Naive thymus-derived CD4-positive, alpha-beta T cell (primary cell): ENCODE measurements at regions of chr4 and their contacts with region 1.

Region 1: DNA sequence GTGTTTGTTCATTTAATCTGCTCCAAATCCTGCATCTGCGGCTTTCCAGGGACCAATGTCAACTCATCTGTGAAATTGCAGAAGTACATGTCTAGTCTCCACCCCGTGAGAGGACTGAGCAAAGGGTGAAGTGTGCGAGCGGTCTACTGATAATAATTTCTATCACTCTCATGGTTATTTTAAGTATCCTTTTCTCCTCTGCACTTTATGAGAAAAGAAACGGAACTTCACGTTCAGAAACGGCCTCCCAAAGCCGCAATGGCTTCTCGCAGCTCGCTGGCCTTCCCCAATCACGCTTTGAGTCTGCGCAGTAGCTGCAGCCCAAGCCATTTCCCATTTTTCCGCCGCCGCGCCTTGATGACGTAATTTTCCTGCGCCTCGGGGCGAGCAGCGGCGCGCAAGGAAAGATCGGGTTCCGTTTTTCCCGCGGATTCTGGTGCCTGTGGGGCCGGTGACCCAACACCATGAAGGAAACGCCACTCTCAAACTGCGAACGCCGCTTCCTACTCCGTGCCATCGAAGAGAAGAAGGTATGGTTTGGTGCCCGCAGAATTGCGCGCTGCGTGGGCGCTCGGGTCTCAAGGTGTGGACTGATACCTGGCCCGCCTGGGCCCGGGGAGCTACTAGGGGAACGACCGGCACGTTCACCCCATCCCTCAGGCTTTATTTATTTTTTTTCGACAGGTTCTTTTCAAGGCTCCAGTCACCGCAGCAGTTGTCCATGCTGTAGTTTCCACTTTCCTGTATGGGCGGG is at the start of gene EXOSC9:
- DNase-seq: peak; percentile 88 to 98 (median 95)
- ATAC-seq: peak; percentile 92
- H3K4me3 ChIP-seq: peak within 1 kb of the TSS; percentile 92
- H3K4me3 Mint-ChIP-seq: peak within 1 kb of the TSS; percentile 89 to 99 (median 95)
- H3K27ac ChIP-seq: peak within 1 kb of the TSS; percentile 93
- H3K27ac Mint-ChIP-seq: peak within 1 kb of the TSS; percentile 97 to 100 (median 99)
- H3K4me1 ChIP-seq: peaks cover 16 to 20% of the 10 kb centered on the region in 2 donors
- H3K4me1 Mint-ChIP-seq: peaks cover 26 to 55% (median 50%) of the 10 kb centered on the region in 7 donors
- H3K27me3 ChIP-seq: no peaks in the 10 kb centered on the region
- H3K27me3 Mint-ChIP-seq: peaks cover 0 to 2% (median 0%) of the 10 kb centered on the region in 5 donors
- total RNA-seq, gene EXOSC9: 37.5 to 55.0 (median 44.2) TPM

Region 2: GRCh38 chr4:121182296-121182695 is 618.8 kb before region 1 on chr4:
- CTCF ChIA-PET with region 1: no interaction called
- POLR2A ChIA-PET with region 1: no interaction called
- intact Hi-C with region 1: loop called in 1 of 2 experiments (anchors 2 kb)
- DNase-seq: peak in 7 of 9 donors; percentile 59 to 79 (median 67)
- ATAC-seq: peak; percentile 84
- H3K4me3 ChIP-seq: peak overlapping the region; percentile 54
- H3K4me3 Mint-ChIP-seq: peak overlapping the region; percentile 62 to 89 (median 84)
- H3K27ac ChIP-seq: peak overlapping the region; percentile 94
- H3K27ac Mint-ChIP-seq: peak overlapping the region; percentile 92 to 97 (median 95)
- H3K4me1 ChIP-seq: peaks cover 43 to 52% of the 10 kb centered on the region in 2 donors
- H3K4me1 Mint-ChIP-seq: peaks cover 52 to 93% (median 80%) of the 10 kb centered on the region in 7 donors
- H3K27me3 ChIP-seq: no peaks in the 10 kb centered on the region
- H3K27me3 Mint-ChIP-seq: no peaks in the 10 kb centered on the region

Region 3: GRCh38 chr4:121397941-121398601 is 403.1 kb before region 1 on chr4:
- CTCF ChIA-PET with region 1: no interaction called
- POLR2A ChIA-PET with region 1: no interaction called
- intact Hi-C with region 1: no loop called
- DNase-seq: no peak
- ATAC-seq: no peak
- H3K4me3 ChIP-seq: no peak overlapping the region
- H3K4me3 Mint-ChIP-seq: no peak overlapping the region
- H3K27ac ChIP-seq: no peak overlapping the region
- H3K27ac Mint-ChIP-seq: no peak overlapping the region
- H3K4me1 ChIP-seq: no peaks in the 10 kb centered on the region
- H3K4me1 Mint-ChIP-seq: no peaks in the 10 kb centered on the region
- H3K27me3 ChIP-seq: no peaks in the 10 kb centered on the region
- H3K27me3 Mint-ChIP-seq: peaks cover 0 to 4% (median 0%) of the 10 kb centered on the region in 5 donors

Region 4: DNA sequence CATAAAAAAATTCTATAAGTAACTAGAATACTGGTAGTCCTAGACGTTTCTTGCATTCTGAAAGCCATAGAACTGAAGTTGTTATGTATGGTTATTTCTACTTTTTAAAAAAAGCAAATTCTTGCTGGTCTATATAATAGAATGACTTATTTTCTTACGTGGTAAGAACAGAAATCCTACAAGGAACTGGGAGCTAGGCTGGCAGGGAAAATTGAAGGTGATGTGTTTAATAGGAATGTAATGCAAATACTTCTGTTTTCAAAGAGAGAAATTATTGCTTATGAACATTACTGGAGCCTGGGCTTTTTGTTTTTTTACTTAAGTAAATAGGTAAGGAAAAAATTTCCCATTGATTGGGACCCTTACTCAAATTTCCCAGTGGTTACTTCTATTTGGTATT is 13.6 kb after region 1 on chr4:
- CTCF ChIA-PET with region 1: no interaction called
- POLR2A ChIA-PET with region 1: interaction called, 11 read pairs
- intact Hi-C with region 1: no loop called
- DNase-seq: no peak
- ATAC-seq: no peak
- H3K4me3 ChIP-seq: no peak overlapping the region
- H3K4me3 Mint-ChIP-seq: no peak overlapping the region
- H3K27ac ChIP-seq: no peak overlapping the region
- H3K27ac Mint-ChIP-seq: peak overlapping the region in 1 of 9 donors; percentile 56
- H3K4me1 ChIP-seq: no peaks in the 10 kb centered on the region
- H3K4me1 Mint-ChIP-seq: peaks cover 0 to 53% (median 6%) of the 10 kb centered on the region in 7 donors
- H3K27me3 ChIP-seq: no peaks in the 10 kb centered on the region
- H3K27me3 Mint-ChIP-seq: no peaks in the 10 kb centered on the region

Region 5: DNA sequence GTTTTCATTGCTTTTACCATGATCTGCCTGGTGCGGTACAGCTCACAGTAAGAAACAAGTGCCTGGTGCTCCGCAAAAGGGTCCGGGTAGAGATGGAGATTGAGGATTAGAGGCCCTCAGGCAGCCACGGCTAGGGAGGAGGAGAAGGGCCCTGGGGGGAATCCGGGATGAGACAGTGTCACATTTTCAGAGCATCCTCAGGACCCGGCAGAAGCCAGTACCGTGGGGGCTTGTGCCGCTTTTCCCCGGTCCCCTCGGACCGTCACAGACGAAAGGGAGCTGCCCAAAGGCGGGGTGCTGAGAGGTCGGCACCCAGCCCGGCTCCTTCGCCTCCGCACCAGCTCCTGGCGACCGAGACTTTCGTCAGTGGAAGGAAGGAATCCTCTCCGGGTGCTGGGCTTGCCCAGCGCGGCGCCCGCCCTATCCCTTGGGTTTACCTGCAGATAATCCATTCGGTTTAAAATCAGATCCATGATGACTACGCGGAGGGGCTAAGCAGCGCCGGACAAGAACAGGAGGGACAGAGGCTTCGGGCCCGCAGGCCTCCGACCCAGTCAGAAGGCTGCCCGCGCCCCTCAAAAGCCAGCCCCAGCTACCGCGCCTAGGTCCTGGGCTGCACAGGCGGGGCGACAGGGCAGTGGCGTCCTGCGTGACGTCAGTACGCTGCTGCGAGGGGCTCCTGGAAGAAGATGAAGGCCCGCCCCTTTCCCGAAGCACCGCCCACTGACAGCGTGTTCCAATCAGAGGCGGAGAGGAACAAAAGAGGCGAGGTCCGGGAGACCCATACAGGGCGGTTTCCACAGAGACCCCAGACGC is 68.9 kb after region 1 on chr4 and contains the start of gene BBS7:
- CTCF ChIA-PET with region 1: no interaction called
- POLR2A ChIA-PET with region 1: interaction called, 4 read pairs
- intact Hi-C with region 1: loop called (anchors 1 kb)
- DNase-seq: peak; percentile 79 to 93 (median 89)
- ATAC-seq: peak; percentile 98
- H3K4me3 ChIP-seq: peak within 1 kb of the TSS; percentile 99
- H3K4me3 Mint-ChIP-seq: peak within 1 kb of the TSS; percentile 88 to 98 (median 97)
- H3K27ac ChIP-seq: peak within 1 kb of the TSS; percentile 77
- H3K27ac Mint-ChIP-seq: peak within 1 kb of the TSS; percentile 69 to 95 (median 90)
- H3K4me1 ChIP-seq: peaks cover 0 to 10% of the 10 kb centered on the region in 2 donors
- H3K4me1 Mint-ChIP-seq: peaks cover 9 to 17% (median 15%) of the 10 kb centered on the region in 7 donors
- H3K27me3 ChIP-seq: no peaks in the 10 kb centered on the region
- H3K27me3 Mint-ChIP-seq: peaks cover 0 to 30% (median 12%) of the 10 kb centered on the region in 5 donors
- total RNA-seq, gene BBS7: 3.7 to 13.1 (median 8.1) TPM

Region 6: DNA sequence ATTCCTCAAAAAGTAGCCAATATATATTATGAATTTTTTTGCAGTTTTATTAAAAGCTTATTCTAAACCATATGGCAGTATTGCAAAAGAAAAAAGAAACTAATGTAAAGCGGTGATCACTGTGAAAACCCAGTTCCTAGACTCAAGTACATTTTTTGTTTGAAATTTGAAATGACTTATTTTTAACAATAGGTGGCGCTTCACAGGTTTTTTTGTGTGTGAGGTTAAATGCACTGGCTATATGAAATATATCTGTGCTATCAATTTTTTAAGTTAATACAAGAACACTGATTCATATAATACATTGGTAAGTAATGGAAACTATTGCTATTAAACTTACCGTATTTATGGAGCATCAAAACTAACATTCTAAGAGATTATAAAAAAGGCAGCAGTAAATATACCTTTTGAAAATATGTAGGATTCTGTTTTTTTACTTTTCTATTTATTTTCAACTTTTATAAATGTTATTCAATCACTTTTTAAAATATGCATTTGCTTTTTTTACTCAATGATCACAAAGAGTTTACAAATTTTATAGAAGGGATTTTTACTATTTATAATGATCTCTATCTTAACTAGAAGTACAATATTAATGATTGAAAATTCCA is 1589.8 kb after region 1 on chr4:
- CTCF ChIA-PET with region 1: no interaction called
- POLR2A ChIA-PET with region 1: no interaction called
- intact Hi-C with region 1: loop called (anchors 5 to 10 kb)
- DNase-seq: peak in 4 of 9 donors; percentile 9 to 32 (median 23)
- ATAC-seq: no peak
- H3K4me3 ChIP-seq: no peak overlapping the region
- H3K4me3 Mint-ChIP-seq: no peak overlapping the region
- H3K27ac ChIP-seq: no peak overlapping the region
- H3K27ac Mint-ChIP-seq: no peak overlapping the region
- H3K4me1 ChIP-seq: no peaks in the 10 kb centered on the region
- H3K4me1 Mint-ChIP-seq: peaks cover 0 to 4% (median 0%) of the 10 kb centered on the region in 7 donors
- H3K27me3 ChIP-seq: no peaks in the 10 kb centered on the region
- H3K27me3 Mint-ChIP-seq: peaks cover 0 to 33% (median 13%) of the 10 kb centered on the region in 5 donors